ENCODE measurements at regions of chr11 and their contacts with region 1.

Region 1: DNA sequence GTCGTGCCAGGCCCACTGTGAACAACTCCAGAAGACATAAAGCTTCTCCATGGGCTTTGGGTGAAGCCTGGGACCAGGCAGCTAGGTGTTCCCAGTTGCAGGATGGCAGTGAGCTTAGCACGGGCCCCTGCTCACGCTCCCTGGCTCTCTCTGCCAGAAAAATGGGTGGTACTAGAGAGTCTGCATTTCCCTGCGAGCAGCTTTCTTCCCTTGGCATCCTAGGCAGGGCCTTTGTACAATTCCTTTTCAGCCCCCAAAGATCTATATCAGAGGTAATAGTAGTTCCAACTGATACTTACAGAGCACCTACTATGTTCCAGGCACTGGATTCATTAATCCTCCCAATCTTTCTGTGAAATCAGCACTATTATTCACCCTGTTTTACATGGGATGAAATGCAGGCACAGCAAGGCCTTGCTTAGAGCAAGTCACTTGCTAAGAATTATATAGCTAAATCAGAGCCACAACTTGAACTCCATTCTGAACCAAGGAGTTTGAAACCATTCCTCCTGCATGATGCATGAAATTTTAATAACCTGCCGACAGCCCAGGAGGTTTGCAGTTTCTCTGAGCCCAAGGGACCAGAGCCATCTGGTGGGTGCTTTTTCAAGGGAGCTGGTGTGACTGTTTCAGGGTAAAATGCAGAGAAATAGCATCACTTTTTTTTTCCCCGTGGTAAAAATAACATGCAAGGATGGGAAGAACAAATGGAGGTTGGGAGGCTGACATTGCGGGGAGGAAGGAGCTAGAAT is 22.7 kb downstream of the NAV2 start:
- DNase-seq: peak; percentile 63
- H3K4me3 ChIP-seq: no peak overlapping the region
- CTCF ChIP-seq: peak; percentile 42

Region 2: DNA sequence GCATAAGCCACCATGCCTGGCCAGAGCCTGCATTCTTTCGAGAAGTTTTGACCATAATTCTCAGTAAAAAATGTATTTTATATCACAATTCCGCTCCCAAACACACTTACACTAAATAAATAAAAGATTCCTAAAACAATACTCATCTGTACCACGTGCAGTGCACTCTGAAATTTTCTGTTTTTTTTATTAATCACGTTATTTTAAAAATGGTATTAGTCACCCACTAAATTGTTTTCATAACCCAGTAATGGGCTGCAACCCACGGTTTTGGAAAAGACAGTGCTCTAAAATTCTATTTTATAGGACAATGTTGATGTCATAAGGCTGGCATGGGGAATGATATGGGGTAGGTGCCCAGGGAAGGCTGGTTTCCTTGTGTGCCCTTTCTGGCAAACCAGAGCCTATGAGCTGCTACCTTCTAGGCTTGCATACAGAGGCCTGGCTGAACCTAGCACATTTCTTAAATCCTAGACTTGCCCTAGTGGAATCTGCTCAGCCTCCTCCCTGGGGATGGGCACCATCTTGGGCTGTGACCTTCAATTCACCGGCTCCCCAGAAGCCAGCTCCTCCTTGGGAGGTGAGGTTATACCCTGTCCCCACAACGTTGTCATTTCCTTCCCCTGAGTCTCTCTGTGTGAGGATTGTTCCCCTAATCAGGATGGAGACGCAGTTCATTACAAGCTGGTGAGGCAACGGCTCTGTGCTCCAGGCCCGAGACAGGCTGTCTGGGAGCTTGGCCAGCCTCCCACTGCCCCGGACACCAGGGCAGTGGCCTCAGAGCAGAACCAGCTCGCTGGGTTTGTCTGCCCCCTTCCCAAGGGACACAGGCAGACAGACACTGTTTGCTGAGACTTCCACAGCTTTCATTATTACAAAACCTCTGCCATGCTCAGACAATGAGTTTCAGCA is 139.2 kb before region 1 on chr11:
- CTCF ChIA-PET with region 1: interaction called, 10 read pairs
- POLR2A ChIA-PET with region 1: no interaction called
- DNase-seq: peak; percentile 80
- H3K4me3 ChIP-seq: peak overlapping the region; percentile 1; the same call in 1 of the 2 replicates
- CTCF ChIP-seq: no peak

Region 3: DNA sequence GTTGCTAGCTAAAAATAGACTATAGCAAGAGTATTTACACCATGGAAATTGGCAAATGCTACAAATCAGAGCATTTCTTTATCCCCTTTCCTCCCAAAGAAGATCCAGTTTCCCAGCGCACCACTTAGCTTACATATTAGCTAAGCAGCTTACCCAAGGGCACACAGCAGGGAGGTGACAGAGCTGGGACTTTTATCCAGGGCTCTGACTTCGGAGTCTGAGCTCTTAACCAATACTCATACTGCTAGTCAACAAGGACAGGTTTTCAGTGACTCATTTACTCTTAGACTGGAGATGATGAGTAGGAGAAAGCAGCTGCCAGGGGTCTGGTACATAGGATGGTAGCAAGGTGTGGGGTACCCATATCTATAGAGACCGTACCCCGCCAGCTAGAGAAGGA is 15.7 kb after region 1 on chr11:
- CTCF ChIA-PET with region 1: interaction called, 12 read pairs
- POLR2A ChIA-PET with region 1: no interaction called
- DNase-seq: no peak
- H3K4me3 ChIP-seq: no peak overlapping the region
- CTCF ChIP-seq: no peak

Region 4: DNA sequence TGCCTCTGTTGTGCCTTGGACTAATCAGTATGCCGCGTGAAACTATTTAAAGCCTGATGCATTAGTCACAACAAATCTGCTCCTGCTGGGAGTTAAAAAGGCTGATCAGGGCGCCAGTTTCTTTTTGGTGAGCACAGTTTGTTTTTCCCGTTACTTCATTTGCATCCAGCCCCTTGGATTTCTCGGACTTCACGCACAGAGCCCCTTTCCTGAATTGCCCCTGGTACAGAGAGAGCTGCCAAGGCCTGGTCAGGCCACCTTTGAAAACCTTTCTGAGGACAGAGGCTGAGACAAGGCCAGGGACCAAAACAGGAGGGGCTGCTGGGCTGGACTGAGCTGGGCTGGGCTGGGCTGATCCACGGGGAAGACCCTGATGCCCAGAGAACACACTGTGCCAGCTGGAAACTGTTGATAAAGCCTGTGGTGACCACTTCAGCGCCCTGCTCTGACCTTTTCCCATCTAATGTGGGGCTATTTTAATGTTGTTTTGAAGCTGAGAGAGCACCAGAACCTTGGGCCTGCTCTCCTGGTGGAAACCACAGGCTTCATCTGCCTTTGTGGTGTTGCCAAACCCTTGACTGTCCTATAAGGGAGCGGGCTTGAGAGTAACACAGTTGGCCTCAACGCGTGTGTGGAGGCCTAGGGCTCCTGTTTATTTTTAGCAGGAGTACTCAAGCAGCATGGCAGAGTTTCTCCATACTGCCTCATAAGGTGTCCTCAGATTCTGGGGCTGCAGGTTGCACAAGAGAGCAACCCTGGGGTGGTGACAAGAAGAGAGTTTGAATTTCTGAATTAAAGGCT is 21.5 kb after region 1 on chr11:
- CTCF ChIA-PET with region 1: interaction called, 12 read pairs
- POLR2A ChIA-PET with region 1: no interaction called
- DNase-seq: no peak
- H3K4me3 ChIP-seq: no peak overlapping the region
- CTCF ChIP-seq: no peak

Region 5: DNA sequence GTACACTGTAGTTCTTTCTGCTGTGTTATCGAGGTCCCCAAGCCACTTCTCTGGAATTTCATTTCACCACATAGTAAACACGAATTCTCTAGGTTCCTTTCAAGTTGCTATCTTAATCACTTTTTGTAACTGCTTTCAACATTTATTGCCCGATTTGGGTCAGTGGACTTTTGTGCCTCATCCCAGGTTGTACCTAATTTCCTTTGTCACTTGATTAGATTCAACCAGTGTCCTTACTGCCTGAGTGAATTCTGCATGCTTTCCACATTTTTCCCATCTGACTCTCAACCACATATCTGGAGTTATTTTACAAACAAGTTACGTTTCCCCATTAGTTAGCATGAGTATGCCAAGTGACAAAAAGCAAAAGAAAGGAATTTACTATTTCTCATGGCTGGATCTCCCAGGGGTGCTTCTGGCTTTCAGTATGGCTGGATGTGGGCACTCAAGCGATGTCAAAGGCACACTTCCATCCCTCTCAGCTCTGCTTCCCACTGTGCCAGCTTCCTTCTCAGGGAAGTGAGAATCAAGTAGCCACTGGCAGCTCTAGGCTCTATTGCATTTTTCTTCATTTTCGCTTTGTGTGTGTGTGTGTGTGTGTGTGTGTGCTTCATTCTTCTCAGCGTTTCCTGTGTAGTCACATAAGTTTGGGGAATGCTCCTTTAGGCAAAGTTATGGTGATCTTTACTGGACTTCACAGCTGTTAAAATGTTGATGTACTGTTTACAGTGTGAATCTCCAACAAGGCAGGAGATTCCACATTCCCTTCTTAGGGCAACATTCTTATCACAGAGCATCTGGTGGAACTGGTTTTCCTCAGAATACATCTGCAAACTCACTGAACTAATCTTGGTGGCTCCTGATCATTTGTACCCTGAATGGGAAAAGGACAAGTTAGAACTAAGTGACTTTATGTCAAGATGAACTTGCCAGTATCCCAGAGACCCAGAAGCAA is 296.1 kb after region 1 on chr11:
- CTCF ChIA-PET with region 1: no interaction called
- POLR2A ChIA-PET with region 1: no interaction called
- DNase-seq: peak; percentile 91
- H3K4me3 ChIP-seq: peak overlapping the region; percentile 19
- CTCF ChIP-seq: no peak

Measured in AG04449 (cell line).